ENCODE measurements at regions of chr16 and their contacts with region 1.

Region 1: DNA sequence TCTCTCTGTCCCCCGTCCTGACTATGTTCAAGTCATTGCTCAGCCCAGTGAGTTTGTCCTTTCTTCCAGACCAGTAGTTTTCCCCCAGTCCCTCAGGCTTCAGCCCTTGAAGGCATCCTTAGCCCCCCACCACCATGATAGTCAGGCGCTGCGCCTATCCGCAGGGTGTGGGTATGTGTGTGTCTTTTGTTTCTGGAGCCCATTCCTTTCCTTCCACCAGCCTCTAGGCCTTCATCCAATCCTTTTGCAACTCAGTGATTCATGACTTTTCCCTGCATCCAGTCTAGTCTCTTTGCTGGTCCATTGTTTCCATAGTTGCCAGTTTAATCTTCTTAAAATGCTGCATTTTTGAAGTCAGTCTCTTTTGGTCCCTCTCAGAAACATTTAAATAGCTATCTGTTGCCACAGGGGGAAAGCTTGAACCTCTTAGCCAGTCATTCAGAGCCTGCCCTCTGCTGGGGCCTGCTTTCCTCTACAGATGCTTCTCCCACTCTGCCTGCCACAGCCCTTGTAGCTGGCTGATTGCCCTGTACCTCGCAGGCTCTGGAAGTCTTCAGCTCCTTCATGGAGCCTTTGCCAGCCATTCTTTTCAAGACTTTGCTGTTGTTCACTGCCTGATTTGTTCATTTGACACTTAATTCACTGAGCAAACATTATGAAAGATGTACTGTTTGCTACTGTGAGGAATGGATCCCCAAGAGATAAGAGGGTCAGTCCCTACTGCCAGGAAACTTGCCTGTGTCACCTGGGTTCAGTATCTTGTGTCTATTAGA is 55.9 kb upstream of the ADCY7 start:
- DNase-seq: peak; percentile 84
- ATAC-seq: peak; percentile 95

Region 2: DNA sequence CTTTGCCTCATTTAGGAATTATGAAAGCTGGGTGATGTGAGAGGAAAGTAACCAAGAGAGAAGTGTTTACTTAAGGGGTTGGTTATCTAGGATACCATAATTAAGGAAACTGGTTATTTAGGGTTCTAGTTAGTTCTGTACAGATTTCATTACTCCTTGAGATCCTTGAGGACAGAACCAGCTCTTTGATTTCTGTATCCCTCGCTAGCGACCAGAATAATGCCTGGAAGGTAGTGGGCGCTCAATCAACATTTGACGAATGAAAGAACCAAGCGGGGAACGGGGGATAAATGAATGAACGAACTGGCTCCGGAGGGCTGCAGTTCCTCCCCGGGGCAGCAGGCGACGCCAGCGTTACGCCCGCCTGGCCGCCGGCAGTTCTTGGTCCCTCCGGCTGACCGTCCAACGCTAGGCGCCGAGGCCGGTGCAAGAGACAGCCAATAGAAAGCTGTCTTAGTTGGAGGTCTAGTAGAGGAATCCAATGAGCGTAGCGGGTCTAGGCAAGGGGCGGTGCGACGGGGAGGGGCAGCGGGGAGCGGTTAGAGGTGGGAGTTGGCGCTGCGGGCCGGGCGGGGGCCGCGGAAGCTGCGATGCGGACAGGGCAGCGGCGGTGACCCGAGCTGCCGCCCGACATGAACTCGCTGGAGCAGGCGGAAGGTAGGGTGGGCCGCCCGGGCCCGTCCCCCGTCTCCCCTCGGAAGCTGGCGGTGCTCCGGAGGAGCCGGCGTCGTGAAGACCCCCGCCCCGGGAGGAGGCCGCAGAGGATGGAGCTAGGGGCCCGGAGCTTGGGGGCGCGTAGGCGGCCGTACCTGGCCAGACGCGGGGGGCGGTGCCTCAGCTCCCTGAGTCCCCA is 185.5 kb before region 1 on chr16 and contains the start of gene CNEP1R1:
- intact Hi-C with region 1: loop called (anchors 10 kb)
- DNase-seq: peak; percentile 96
- ATAC-seq: peak; percentile 100
- total RNA-seq, gene CNEP1R1: 16.9 TPM

Region 3: DNA sequence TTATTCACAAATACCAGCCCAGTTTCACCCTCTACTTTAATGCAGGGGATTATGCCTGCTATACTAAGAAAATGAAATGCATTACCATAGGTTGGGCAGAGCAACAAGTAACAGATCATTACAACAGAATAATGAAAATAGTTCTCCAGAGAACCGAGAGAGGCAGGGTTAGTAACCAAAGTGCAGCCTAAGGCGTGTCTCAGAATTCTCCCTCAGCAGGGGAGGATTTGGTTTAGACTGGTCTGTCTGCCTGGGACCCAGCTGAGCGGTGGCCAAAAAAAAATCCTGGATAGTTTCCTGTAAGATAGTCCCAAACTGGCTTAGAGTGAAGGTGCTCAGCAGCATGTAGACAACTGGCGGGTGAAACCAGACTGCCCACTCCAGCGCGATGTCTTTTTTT is 25.1 kb after region 1 on chr16:
- intact Hi-C with region 1: no loop called
- DNase-seq: no peak
- ATAC-seq: peak; percentile 26

Region 4: GRCh38 chr16:50381679-50382440 is 171.4 kb after region 1 on chr16:
- intact Hi-C with region 1: no loop called
- DNase-seq: no peak
- ATAC-seq: no peak

Measured in left ventricle myocardium superior (tissue), 1 donor.